Mammary epithelial cell (primary cell): ENCODE measurements at regions of chr12 and their contacts with region 1.

Region 1: DNA sequence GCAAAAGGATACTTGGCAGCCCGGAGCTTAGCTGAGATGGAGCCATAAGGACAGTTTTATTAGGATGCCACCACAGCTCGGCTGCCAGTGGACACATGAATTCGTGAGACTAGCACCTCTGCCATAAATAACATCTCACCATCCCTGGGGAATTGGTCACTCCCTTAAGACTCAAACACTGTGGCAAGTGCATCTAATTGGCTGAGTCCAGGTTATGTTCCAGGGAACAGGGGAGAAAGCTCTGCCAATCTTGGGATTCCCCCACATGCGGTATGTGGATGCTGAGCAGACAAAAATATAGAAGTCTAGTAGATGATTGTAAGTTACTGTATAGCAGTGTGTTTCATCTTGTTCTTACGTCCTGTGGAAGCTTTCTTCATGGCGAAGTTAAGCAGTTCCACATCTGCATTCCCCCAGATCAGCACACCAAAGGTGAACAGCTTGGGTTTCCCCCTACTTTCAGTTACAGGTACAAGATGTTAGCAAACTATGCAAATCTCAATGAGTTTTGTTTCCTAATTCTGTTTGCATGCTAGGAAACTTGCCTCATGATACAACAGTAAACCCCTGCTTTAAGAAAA is 131.1 kb downstream of the ETV6 start:
- DNase-seq: no peak
- H3K4me3 ChIP-seq: no peak overlapping the region
- H3K27ac ChIP-seq: no peak overlapping the region
- H3K4me1 ChIP-seq: peaks cover 7% of the 10 kb centered on the region
- H3K27me3 ChIP-seq: no peaks in the 10 kb centered on the region
- CTCF ChIP-seq: no peak

Region 2: GRCh38 chr12:11869941-11870540 is 89.4 kb after region 1 on chr12:
- CTCF ChIA-PET with region 1: no interaction called
- dilution Hi-C with region 1: loop called (anchors 5 kb)
- in situ Hi-C with region 1: no loop called
- intact Hi-C with region 1: no loop called
- DNase-seq: no peak
- H3K4me3 ChIP-seq: no peak overlapping the region
- H3K27ac ChIP-seq: no peak overlapping the region
- H3K4me1 ChIP-seq: peaks cover 11% of the 10 kb centered on the region
- H3K27me3 ChIP-seq: no peaks in the 10 kb centered on the region
- CTCF ChIP-seq: no peak

Region 3: GRCh38 chr12:12046401-12046800 is 265.8 kb after region 1 on chr12:
- CTCF ChIA-PET with region 1: no interaction called
- dilution Hi-C with region 1: no loop called
- in situ Hi-C with region 1: no loop called
- intact Hi-C with region 1: no loop called
- DNase-seq: peak; percentile 67
- H3K4me3 ChIP-seq: no peak overlapping the region
- H3K27ac ChIP-seq: no peak overlapping the region
- H3K4me1 ChIP-seq: peaks cover 10% of the 10 kb centered on the region
- H3K27me3 ChIP-seq: no peaks in the 10 kb centered on the region
- CTCF ChIP-seq: no peak